H1 (cell line): ENCODE measurements at regions of chr6 and their contacts with region 1.

Region 1: DNA sequence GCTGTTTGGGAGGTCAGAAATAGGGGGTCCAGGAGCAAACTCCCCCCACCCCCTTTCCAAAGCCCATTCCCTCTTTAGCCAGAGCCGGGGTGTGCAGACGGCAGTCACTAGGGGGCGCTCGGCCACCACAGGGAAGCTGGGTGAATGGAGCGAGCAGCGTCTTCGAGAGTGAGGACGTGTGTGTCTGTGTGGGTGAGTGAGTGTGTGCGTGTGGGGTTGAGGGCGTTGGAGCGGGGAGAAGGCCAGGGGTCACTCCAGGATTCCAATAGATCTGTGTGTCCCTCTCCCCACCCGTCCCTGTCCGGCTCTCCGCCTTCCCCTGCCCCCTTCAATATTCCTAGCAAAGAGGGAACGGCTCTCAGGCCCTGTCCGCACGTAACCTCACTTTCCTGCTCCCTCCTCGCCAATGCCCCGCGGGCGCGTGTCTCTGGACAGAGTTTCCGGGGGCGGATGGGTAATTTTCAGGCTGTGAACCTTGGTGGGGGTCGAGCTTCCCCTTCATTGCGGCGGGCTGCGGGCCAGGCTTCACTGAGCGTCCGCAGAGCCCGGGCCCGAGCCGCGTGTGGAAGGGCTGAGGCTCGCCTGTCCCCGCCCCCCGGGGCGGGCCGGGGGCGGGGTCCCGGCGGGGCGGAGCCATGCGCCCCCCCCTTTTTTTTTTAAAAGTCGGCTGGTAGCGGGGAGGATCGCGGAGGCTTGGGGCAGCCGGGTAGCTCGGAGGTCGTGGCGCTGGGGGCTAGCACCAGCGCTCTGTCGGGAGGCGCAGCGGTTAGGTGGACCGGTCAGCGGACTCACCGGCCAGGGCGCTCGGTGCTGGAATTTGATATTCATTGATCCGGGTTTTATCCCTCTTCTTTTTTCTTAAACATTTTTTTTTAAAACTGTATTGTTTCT is at the start of gene VEGFA:
- DNase-seq: peak in 1 of 2 experiments; percentile 97
- H3K4me3 ChIP-seq: peak within 1 kb of the TSS; percentile 77 to 91 (median 85)
- H3K27ac ChIP-seq: no peak within 1 kb of the TSS; the same call in 1 of the 2 replicates
- H3K4me1 ChIP-seq: peaks cover 3 to 31% (median 18%) of the 10 kb centered on the region in 4 experiments
- H3K27me3 ChIP-seq: peaks cover 0 to 7% (median 0%) of the 10 kb centered on the region in 4 experiments; a peak in 1 of 7 replicates
- CTCF ChIP-seq: peak in 2 of 3 experiments; percentile 89 to 96; a peak in 3 of 4 replicates
- EP300 ChIP-seq: no peak
- POLR2A ChIP-seq: no peak
- RAD21 ChIP-seq: peak; percentile 92 to 93
- total RNA-seq, gene VEGFA: 40.7 and 42.2 TPM in 2 replicates

Region 2: DNA sequence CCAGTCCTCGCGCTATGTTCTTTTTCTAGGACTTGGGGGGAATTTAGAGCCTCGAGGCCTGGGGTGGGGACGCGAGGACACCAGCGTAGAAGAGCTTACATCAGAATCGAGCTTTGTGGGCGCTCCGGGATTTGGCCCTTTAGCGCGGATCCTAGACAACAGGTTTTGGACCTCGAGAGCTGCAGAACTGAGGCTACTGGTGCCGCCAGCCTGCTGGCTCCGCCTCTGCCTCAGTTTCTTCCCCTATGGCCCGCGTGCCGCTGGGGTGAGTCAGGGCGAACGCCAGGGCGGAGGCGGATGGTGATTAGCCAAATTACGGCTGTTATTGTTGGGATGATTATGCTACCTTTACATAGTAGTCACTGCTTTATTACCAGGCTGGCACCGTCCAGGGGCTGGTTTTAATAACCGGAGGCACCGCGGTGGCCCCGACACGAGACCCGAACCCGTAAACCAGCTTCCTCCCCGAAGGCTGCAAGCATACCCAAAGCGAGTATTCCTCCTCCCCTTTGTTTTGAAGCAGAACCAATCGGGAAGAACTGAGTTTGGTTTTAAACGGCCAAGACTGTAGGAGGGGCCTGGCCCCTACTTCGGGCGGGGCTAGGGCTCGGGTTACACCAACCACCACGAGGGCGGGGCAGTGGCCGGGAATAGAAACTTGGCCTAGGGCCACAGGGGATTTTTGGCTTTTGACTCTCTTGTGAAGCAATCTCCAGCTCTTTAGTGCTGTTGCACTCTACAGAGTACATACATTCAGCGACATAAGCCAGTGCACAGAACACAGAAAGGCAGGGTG is 140.1 kb before region 1 on chr6:
- CTCF ChIA-PET with region 1: no interaction called
- POLR2A ChIA-PET with region 1: interaction called, 23 read pairs
- DNase-seq: peak; percentile 90 to 91
- H3K4me3 ChIP-seq: peak overlapping the region; percentile 59 to 89 (median 68)
- H3K27ac ChIP-seq: peak overlapping the region; percentile 90
- H3K4me1 ChIP-seq: peaks cover 0 to 4% (median 0%) of the 10 kb centered on the region in 4 experiments; a peak in 3 of 7 replicates
- H3K27me3 ChIP-seq: no peaks in the 10 kb centered on the region
- CTCF ChIP-seq: no peak
- EP300 ChIP-seq: no peak
- POLR2A ChIP-seq: peak; percentile 64 to 95
- RAD21 ChIP-seq: no peak

Region 3: GRCh38 chr6:43702534-43703440 is 67.0 kb before region 1 on chr6:
- CTCF ChIA-PET with region 1: interaction called, 7 read pairs
- POLR2A ChIA-PET with region 1: interaction called, 15 read pairs
- DNase-seq: peak; percentile 90 to 91
- H3K4me3 ChIP-seq: peak overlapping the region in 3 of 4 experiments; percentile 7 to 48 (median 18); a peak in 4 of 8 replicates
- H3K27ac ChIP-seq: peak overlapping the region; percentile 79
- H3K4me1 ChIP-seq: peaks cover 24 to 38% (median 27%) of the 10 kb centered on the region in 4 experiments
- H3K27me3 ChIP-seq: no peaks in the 10 kb centered on the region
- CTCF ChIP-seq: no peak
- EP300 ChIP-seq: peak in 1 of 2 experiments; percentile 84; a peak in 1 of 3 replicates
- POLR2A ChIP-seq: peak in 1 of 2 experiments; percentile 83; a peak in 1 of 3 replicates
- RAD21 ChIP-seq: peak in 1 of 2 experiments; percentile 14; a peak in 2 of 4 replicates

Region 4: DNA sequence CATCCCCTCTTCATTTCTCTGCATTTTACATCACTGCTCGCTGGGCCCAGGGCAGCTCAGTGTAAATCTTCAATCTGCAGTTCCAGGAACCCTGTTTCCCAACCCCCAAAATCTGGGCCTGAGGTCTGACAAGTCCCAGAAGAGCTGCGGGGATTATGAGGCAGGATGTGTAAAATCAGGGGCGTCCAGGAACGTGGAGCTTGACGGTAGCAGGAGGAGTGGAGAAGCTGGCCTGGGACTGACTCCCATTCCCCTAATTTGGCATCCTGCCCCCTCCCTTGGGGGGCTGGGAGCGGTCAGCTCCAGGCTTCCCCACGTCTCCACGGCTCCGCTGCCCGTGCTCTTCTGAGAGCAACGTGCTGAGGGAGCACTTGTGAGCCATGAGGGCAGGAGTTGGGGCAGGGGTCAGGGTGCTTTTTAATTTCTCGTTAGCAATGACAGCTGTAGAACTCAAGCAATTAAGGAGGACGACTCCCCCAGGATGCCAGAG is 23.1 kb before region 1 on chr6:
- CTCF ChIA-PET with region 1: interaction called, 137 read pairs
- POLR2A ChIA-PET with region 1: interaction called, 7 read pairs
- DNase-seq: peak in 1 of 2 experiments; percentile 42
- H3K4me3 ChIP-seq: no peak overlapping the region
- H3K27ac ChIP-seq: no peak overlapping the region
- H3K4me1 ChIP-seq: peaks cover 0 to 10% (median 3%) of the 10 kb centered on the region in 4 experiments; a peak in 4 of 7 replicates
- H3K27me3 ChIP-seq: no peaks in the 10 kb centered on the region
- CTCF ChIP-seq: no peak
- EP300 ChIP-seq: no peak
- POLR2A ChIP-seq: no peak
- RAD21 ChIP-seq: no peak

Region 5: DNA sequence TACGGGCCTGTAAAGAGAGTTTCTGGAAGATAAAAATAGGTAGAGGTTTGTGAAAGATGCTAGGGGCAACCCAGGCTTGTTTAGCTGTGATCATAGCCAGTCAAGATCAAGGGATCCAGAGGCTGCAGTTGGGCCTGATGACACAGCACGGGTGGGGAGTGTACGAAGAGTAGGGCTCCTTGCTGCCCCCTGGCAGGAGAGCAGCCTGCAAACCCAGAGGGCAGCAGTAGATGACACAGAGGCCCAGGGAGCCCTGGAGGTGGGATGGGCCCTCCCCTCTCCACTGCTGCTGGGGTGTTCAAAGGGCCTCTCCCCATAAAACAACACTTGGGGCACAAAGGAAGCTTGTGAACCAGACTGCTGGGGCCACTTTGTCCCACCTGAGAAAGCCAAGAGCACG is 47.4 kb after region 1 on chr6:
- CTCF ChIA-PET with region 1: interaction called, 13 read pairs
- POLR2A ChIA-PET with region 1: interaction called, 3 read pairs
- DNase-seq: peak; percentile 27 to 61
- H3K4me3 ChIP-seq: no peak overlapping the region
- H3K27ac ChIP-seq: no peak overlapping the region
- H3K4me1 ChIP-seq: no peaks in the 10 kb centered on the region
- H3K27me3 ChIP-seq: no peaks in the 10 kb centered on the region
- CTCF ChIP-seq: peak; percentile 70 to 76 (median 73)
- EP300 ChIP-seq: no peak
- POLR2A ChIP-seq: no peak
- RAD21 ChIP-seq: peak; percentile 49 to 61

Region 6: GRCh38 chr6:43926634-43927524 is 157.1 kb after region 1 on chr6:
- CTCF ChIA-PET with region 1: interaction called, 6 read pairs
- POLR2A ChIA-PET with region 1: interaction called, 11 read pairs
- DNase-seq: peak in 1 of 2 experiments; percentile 62
- H3K4me3 ChIP-seq: no peak overlapping the region
- H3K27ac ChIP-seq: no peak overlapping the region; the same call in 1 of the 2 replicates
- H3K4me1 ChIP-seq: peaks cover 0 to 10% (median 5%) of the 10 kb centered on the region in 4 experiments; a peak in 5 of 7 replicates
- H3K27me3 ChIP-seq: no peaks in the 10 kb centered on the region
- CTCF ChIP-seq: peak in 1 of 3 experiments; percentile 6; a peak in 1 of 4 replicates
- EP300 ChIP-seq: peak in 1 of 2 experiments; percentile 23; a peak in 1 of 3 replicates
- POLR2A ChIP-seq: no peak; a peak in 1 of 3 replicates
- RAD21 ChIP-seq: no peak

Region 7: GRCh38 chr6:44002593-44003344 is 233.0 kb after region 1 on chr6:
- CTCF ChIA-PET with region 1: interaction called, 13 read pairs
- POLR2A ChIA-PET with region 1: interaction called, 8 read pairs
- DNase-seq: peak; percentile 44 to 86
- H3K4me3 ChIP-seq: peak overlapping the region; percentile 22 to 60 (median 37); a peak in 7 of 8 replicates
- H3K27ac ChIP-seq: peak overlapping the region; percentile 20; the same call in 1 of the 2 replicates
- H3K4me1 ChIP-seq: peaks cover 4 to 48% (median 38%) of the 10 kb centered on the region in 4 experiments
- H3K27me3 ChIP-seq: peaks cover 0 to 18% (median 9%) of the 10 kb centered on the region in 4 experiments; a peak in 5 of 7 replicates
- CTCF ChIP-seq: peak in 1 of 3 experiments; percentile 5; a peak in 2 of 4 replicates
- EP300 ChIP-seq: peak in 1 of 2 experiments; percentile 2; a peak in 1 of 3 replicates
- POLR2A ChIP-seq: no peak
- RAD21 ChIP-seq: peak in 1 of 2 experiments; percentile 17; a peak in 1 of 4 replicates